Panc1 (cell line): ENCODE measurements at regions of chr1 and their contacts with region 1.

Region 1: DNA sequence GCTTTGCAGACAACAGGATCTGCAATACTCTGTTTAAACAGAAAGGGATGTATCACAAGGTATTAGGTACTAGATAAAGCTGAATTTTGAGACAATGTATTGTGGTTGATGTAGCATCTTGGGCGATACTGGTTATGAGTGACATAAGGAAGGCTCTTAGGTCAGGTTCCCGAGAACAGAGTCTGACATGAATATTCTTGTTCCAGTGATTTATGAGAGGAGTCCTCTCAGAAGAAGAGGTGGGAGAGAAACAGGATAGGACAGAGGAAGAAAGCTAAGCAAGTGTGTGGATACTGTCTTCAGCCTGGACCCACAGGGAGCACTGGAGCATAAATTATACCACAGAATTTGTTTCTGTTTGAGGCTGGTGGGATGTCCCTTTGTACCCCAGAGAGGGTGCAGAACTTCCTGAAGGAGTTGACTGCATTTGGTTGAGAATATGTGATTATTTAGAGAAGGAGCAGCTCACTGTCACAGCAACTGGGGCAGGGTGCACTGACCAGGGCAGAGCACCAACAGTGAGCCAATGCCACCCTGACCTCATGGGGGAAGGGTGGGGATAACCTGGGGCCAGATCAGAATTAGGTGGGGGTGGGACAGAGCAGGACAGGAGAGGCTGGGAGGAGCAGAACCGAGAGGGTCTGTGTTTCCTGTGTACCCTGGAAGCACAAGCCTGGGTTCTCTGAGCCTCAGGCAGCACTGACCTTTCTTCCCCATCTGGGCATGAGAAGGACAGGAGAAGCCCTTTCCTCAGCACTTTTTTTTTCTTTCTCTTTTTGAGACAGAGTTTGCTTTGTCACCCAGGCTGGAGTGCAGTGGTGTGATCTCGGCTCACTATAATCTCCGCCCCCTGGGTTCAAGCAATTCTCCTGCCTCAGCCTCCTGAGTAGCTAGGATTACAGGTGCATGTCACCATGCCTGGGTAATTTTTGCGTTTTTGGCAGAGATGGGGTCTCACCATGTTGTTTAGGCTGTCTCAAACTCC is 36.3 kb upstream of the SLC6A9 start:
- DNase-seq: no peak
- ATAC-seq: 0 out of 2 replicates have a peak, but pooled peaks have one; percentile 66
- H3K4me3 ChIP-seq: no peak overlapping the region
- H3K27ac ChIP-seq: no peak overlapping the region
- H3K4me1 ChIP-seq: no peaks in the 10 kb centered on the region
- H3K27me3 ChIP-seq: no peaks in the 10 kb centered on the region
- CTCF ChIP-seq: no peak

Region 2: DNA sequence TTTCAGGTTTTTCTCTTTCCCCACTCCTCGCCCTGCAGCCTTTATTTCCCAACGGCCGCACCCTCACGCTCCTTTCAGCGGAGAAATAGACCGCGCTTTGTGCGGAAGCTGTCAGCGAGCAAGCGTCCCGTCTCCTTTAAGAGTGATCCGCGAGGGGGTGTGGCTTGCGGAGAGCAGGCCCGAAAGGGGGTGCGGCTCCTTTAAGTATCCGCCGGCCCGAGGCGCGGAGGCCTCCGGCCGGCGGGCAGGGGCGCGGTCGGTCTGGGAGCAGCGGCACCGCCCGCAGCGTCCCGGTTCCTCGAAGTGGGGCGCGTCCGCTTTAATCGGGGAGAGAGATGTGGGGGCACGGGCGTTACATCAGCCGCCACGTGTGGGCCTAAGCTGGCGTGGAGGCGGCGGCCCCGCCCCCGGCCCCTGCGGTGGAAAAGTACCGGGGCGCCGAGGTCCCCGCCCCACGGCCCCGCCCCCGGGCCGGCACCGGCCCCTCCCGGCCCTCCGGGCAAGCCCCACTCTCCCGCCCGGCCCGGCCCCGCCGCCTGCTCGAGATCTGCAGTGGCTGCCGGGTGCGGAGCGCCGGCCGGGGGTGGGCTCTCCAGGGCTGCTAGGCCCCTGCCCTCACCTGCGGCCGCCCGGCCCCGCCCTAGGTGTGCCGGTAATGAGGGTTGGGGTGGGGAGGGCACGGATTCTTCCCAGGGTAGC is 37.5 kb before region 1 on chr1:
- CTCF ChIA-PET with region 1: no interaction called
- POLR2A ChIA-PET with region 1: no interaction called
- in situ Hi-C with region 1: no loop called
- intact Hi-C with region 1: no loop called
- DNase-seq: no peak
- ATAC-seq: peak; percentile 89
- H3K4me3 ChIP-seq: peak overlapping the region; percentile 78 to 86
- H3K27ac ChIP-seq: peak overlapping the region; percentile 87
- H3K4me1 ChIP-seq: peaks cover 16% of the 10 kb centered on the region
- H3K27me3 ChIP-seq: no peaks in the 10 kb centered on the region
- CTCF ChIP-seq: no peak

Region 3: GRCh38 chr1:44305962-44306422 is 238.4 kb after region 1 on chr1:
- CTCF ChIA-PET with region 1: interaction called, 10 read pairs
- POLR2A ChIA-PET with region 1: no interaction called
- in situ Hi-C with region 1: no loop called
- intact Hi-C with region 1: no loop called
- DNase-seq: no peak
- ATAC-seq: no peak
- H3K4me3 ChIP-seq: no peak overlapping the region
- H3K27ac ChIP-seq: no peak overlapping the region
- H3K4me1 ChIP-seq: no peaks in the 10 kb centered on the region; the same call in 1 of the 2 replicates
- H3K27me3 ChIP-seq: no peaks in the 10 kb centered on the region
- CTCF ChIP-seq: no peak